ENCODE measurements at regions of chr11 and their contacts with region 1.

Region 1: GRCh38 chr11:62860835-62861563 is 19.7 kb upstream of the SLC3A2 start:
- H3K4me3 ChIP-seq: no peak overlapping the region
- H3K27ac ChIP-seq: peak overlapping the region; percentile 0; the same call in 1 of the 2 replicates
- H3K4me1 ChIP-seq: no peaks in the 10 kb centered on the region
- CTCF ChIP-seq: no peak

Region 2: GRCh38 chr11:62875698-62876478 is 14.9 kb after region 1 on chr11:
- CTCF ChIA-PET with region 1: interaction called, 17 read pairs
- POLR2A ChIA-PET with region 1: interaction called, 78 read pairs
- H3K4me3 ChIP-seq: no peak overlapping the region
- H3K27ac ChIP-seq: no peak overlapping the region
- H3K4me1 ChIP-seq: no peaks in the 10 kb centered on the region
- CTCF ChIP-seq: no peak

Region 3: GRCh38 chr11:62880803-62881578 is 20.0 kb after region 1 on chr11 and contains the start of gene SLC3A2:
- CTCF ChIA-PET with region 1: interaction called, 17 read pairs
- POLR2A ChIA-PET with region 1: interaction called, 78 read pairs
- H3K4me3 ChIP-seq: peak within 1 kb of the TSS; percentile 93
- H3K27ac ChIP-seq: peak within 1 kb of the TSS; percentile 98
- H3K4me1 ChIP-seq: no peaks in the 10 kb centered on the region
- CTCF ChIP-seq: peak; percentile 97